ENCODE measurements at regions of chr12 and their contacts with region 1.

Region 1: DNA sequence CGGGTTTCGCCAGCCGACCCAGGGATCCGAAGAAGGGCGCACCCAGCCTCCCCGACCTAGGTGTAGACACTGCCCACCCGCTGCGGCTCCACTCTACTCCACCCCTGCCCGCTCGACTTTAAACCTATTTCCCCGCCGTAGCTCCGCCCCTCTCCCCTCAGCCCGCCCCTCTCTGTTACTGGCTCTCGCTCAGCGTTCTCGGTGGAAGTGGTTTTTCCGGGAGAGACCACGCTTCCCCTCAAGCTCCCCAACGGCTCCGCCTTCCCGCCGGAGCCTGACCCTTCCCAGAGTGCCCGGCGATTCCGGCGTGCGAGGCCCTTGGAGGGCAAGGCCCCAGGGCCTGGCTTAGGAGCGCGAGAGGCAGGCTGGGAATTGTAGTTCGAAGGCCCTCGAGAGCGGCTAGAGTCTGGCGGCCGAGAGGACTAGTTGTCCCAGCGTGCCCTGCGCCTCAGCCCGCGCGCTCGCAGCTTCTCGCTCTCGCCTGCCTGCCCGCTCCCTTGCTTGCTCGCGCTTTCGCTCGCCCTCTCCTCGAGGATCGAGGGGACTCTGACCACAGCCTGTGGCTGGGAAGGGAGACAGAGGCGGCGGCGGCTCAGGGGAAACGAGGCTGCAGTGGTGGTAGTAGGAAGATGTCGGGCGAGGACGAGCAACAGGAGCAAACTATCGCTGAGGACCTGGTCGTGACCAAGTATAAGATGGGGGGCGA is at the start of gene PA2G4:
- DNase-seq: peak; percentile 98 to 99
- ATAC-seq: peak; percentile 96 to 98 (median 97)
- H3K4me3 ChIP-seq: peak within 1 kb of the TSS; percentile 93
- H3K27ac ChIP-seq: peak within 1 kb of the TSS; percentile 89
- H3K4me1 ChIP-seq: peaks cover 20% of the 10 kb centered on the region
- H3K27me3 ChIP-seq: no peaks in the 10 kb centered on the region
- CTCF ChIP-seq: no peak
- total RNA-seq, gene PA2G4: 75.3 to 138 (median 112) TPM

Region 2: GRCh38 chr12:55996715-55997534 is 107.3 kb before region 1 on chr12 and contains the start of gene SUOX:
- intact Hi-C with region 1: loop called (anchors 10 kb)
- DNase-seq: peak; percentile 96 to 98
- ATAC-seq: peak; percentile 98 to 99 (median 98)
- H3K4me3 ChIP-seq: peak within 1 kb of the TSS; percentile 68
- H3K27ac ChIP-seq: peak within 1 kb of the TSS; percentile 84
- H3K4me1 ChIP-seq: peaks cover 17% of the 10 kb centered on the region
- H3K27me3 ChIP-seq: no peaks in the 10 kb centered on the region
- CTCF ChIP-seq: no peak
- total RNA-seq, gene SUOX: 12.1 to 24.6 (median 15.6) TPM

Region 3: DNA sequence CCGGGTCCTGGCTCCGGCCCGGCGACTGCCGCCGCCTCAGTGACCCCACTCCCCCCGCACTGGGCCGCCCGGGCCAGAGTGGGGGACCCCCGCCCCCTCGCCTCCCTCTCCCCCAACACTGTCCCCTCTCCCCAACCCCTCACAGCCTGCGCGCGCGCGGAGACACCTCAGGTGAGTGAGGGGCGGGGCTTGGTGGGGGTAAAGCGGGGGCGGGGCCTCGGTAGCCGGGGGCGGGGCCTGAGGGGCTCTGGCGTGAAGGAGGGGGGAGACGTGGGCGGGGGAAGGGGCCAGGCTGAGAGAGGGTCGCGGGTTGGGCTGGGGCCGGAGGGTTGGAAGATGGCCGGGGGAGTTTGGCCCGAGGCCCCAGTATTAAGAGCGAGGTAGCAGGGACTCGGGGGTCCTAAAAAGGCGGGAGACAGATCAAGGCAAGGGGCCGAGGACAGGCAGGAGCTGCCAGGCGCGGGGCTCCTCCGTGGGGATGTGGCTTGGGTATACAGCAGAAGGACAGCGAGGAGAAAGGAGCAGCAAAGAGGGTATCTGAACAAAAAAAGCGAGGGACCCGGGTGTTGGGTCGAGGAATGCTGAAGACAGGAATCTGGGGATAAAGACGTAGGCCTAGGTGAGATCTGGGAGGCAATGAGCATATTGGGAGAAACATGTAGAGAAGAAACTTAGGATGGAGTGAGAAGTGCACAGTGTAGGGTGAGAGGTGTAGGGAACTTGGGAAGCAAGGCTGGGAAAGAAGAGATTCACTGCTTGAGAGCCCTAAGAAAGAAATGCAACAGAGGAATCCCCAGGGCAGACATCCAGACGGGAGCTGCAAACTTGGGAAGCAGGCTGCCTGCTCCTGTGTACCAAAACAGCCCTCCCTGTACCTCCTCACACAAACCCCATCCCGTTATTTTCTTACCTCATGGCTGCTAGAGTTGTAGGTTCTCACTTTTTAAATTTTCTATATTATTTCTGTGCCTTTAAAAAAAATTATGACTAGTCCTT is 96.4 kb before region 1 on chr12:
- intact Hi-C with region 1: loop called in 1 of 2 experiments (anchors 10 kb)
- DNase-seq: peak; percentile 63 to 80
- ATAC-seq: peak; percentile 79 to 85 (median 81)
- H3K4me3 ChIP-seq: peak overlapping the region; percentile 91
- H3K27ac ChIP-seq: peak overlapping the region; percentile 93
- H3K4me1 ChIP-seq: no peaks in the 10 kb centered on the region
- H3K27me3 ChIP-seq: no peaks in the 10 kb centered on the region
- CTCF ChIP-seq: no peak

Region 4: GRCh38 chr12:56041552-56042429 is 62.5 kb before region 1 on chr12 and contains the start of gene RPS26:
- intact Hi-C with region 1: loop called (anchors 2 to 5 kb)
- DNase-seq: peak; percentile 96 to 99
- ATAC-seq: peak; percentile 94 to 96 (median 96)
- H3K4me3 ChIP-seq: peak within 1 kb of the TSS; percentile 93
- H3K27ac ChIP-seq: peak within 1 kb of the TSS; percentile 99
- H3K4me1 ChIP-seq: peaks cover 17% of the 10 kb centered on the region
- H3K27me3 ChIP-seq: no peaks in the 10 kb centered on the region
- CTCF ChIP-seq: peak; percentile 43
- total RNA-seq, gene RPS26: 16.6 to 49.8 (median 23.6) TPM

Region 5: DNA sequence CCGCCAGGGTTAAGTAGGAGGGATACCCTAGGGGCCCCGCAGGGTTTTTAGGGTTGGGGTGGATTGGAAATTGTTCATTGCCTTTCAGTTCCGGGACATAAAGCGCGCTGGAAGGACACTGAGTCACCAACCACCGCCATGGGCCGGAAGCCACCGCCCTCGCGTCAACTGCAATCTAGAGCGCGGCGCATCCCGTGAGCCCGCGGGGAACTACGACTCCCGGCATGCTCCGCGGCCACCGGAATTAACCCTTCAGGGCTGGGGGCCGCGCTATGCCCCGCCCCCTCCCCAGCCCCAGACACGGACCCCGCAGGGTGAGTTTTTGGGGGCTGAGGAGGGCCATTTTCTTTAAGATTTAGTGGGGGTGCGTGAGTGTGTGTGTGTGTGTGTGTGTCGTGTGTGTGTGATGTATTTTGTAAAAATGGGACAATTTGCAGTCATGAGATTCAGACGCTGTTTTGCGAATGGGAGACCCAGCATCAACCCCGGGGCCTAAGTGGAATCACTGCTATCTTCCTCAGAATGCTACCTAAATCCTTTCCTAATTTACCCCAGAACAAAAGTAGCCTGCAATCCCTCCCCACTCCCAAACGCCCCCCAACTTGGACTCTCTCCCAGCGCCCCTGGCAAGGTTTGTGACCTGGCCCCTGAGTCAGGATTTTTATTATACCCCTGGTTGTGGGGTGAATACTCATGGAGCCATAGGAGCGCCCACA is 48.2 kb after region 1 on chr12 and contains the start of gene MYL6B:
- intact Hi-C with region 1: no loop called
- DNase-seq: peak; percentile 96 to 97
- ATAC-seq: peak; percentile 94 to 97 (median 96)
- H3K4me3 ChIP-seq: peak within 1 kb of the TSS; percentile 75
- H3K27ac ChIP-seq: peak within 1 kb of the TSS; percentile 90
- H3K4me1 ChIP-seq: peaks cover 25% of the 10 kb centered on the region
- H3K27me3 ChIP-seq: no peaks in the 10 kb centered on the region
- CTCF ChIP-seq: no peak
- total RNA-seq, gene MYL6B: 113 to 2,222 (median 606) TPM

Region 6: GRCh38 chr12:56165369-56165768 is 61.1 kb after region 1 on chr12:
- intact Hi-C with region 1: no loop called
- DNase-seq: no peak
- ATAC-seq: peak in 1 of 4 donors; percentile 28
- H3K4me3 ChIP-seq: no peak overlapping the region
- H3K27ac ChIP-seq: peak overlapping the region; percentile 7
- H3K4me1 ChIP-seq: peaks cover 13% of the 10 kb centered on the region
- H3K27me3 ChIP-seq: no peaks in the 10 kb centered on the region
- CTCF ChIP-seq: no peak

Measured in psoas muscle (tissue), 8 donors.